Dorsolateral prefrontal cortex (tissue), 120 donors: ENCODE measurements at regions of chr4 and their contacts with region 1.

Region 1: DNA sequence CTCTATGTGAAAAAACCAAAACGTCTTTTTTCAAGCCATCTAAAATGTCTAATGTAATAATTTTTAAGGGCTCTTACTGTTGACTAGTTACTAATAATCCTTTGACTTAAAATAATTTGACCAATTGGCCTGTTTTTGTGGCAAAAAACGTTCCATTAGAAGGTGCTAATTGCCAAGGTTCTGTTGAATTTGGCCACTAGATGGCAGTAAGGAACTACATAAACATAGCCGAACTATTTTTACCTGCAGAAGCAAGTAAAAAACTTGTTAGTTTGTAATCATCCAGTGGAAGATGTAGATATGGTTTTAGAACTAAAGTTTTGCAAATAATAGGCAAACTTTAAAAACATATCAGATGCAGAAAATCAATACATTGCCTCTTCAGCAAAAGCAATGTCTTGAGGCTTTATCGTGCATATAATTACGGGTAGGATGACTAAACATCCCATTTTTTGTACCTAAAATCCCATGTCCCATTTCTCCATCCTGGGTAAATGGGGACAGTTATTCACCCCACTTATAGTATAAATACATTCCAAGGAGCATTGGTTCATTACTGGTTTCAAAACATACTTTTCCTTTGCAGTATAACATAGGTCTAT is 57.6 kb downstream of the PROM1 start:
- DNase-seq: peak in 1 of 10 donors; percentile 21
- H3K4me3 ChIP-seq: peak overlapping the region in 25 of 59 donors; percentile 2 to 50 (median 21)
- H3K27ac ChIP-seq: peak overlapping the region in 1 of 59 donors; percentile 22
- H3K27me3 ChIP-seq: no peaks in the 10 kb centered on the region
- CTCF ChIP-seq: peak; percentile 66 to 99 (median 94)

Region 2: DNA sequence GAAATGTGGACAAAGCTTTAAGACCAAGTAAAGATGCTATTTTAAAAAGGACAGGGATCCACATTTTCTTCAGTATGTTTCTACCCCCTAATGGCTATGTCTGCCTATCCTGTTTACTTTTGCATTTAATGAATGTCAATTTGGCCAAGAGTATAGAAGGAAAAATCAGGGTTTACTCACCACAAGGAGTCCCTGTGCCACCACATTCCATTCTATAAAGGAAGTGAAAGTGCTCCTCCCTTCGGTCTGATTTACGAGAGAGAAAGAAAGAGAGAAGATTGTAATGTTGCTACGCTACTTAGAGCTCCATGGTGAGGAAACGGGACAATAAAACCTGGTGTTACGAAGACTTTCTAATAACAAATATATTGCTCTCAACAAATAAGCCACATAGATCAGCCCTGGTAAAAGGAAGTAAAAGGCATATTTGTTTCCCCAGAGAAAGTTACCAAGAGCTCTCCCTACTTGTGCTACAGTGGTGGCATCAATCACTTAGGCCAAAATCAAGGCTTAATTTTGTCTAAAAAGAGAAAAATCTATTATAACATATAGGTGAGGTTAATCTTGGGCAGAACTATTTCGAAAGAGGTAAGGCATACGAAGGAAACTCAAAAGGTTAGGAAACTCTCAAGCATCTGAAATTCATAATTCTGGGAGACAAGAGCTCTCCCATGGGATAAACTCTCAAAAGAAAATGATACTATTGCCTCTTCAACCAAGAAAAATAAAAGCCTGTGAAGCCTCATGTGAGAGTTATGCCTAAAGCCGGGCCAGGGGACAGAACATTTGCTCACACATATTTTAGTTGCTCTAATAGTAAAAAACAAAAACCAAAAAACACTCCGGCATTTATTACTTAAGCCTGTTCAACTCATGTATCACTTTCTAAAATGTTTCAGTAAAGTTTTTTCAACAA is 170.5 kb after region 1 on chr4:
- intact Hi-C with region 1: loop called (anchors 2 to 5 kb)
- DNase-seq: no peak
- H3K4me3 ChIP-seq: peak overlapping the region in 38 of 59 donors; percentile 2 to 51 (median 25)
- H3K27ac ChIP-seq: peak overlapping the region in 26 of 59 donors; percentile 1 to 66 (median 30)
- H3K27me3 ChIP-seq: no peaks in the 10 kb centered on the region
- CTCF ChIP-seq: peak; percentile 20 to 79 (median 56)